T-cell (primary cell): ENCODE measurements at regions of chrX and their contacts with region 1.

Region 1: GRCh38 chrX:113868177-113868576 is 715.7 kb upstream of the HTR2C start:
- DNase-seq: no peak
- ATAC-seq: no peak
- H3K4me3 ChIP-seq: no peak overlapping the region
- H3K4me3 Mint-ChIP-seq: no peak overlapping the region
- H3K27ac ChIP-seq: no peak overlapping the region
- H3K27ac Mint-ChIP-seq: no peak overlapping the region
- H3K4me1 ChIP-seq: peaks cover 0 to 4% of the 10 kb centered on the region in 2 experiments
- H3K4me1 Mint-ChIP-seq: peaks cover 0 to 6% (median 2%) of the 10 kb centered on the region in 3 donors
- H3K27me3 ChIP-seq: no peaks in the 10 kb centered on the region
- H3K27me3 Mint-ChIP-seq: no peaks in the 10 kb centered on the region

Region 2: GRCh38 chrX:113759422-113759821 is 108.8 kb before region 1 on chrX:
- CTCF ChIA-PET with region 1: no interaction called
- POLR2A ChIA-PET with region 1: no interaction called
- DNase-seq: no peak
- ATAC-seq: no peak
- H3K4me3 ChIP-seq: no peak overlapping the region
- H3K4me3 Mint-ChIP-seq: no peak overlapping the region
- H3K27ac ChIP-seq: no peak overlapping the region
- H3K27ac Mint-ChIP-seq: no peak overlapping the region
- H3K4me1 ChIP-seq: no peaks in the 10 kb centered on the region
- H3K4me1 Mint-ChIP-seq: no peaks in the 10 kb centered on the region
- H3K27me3 ChIP-seq: no peaks in the 10 kb centered on the region
- H3K27me3 Mint-ChIP-seq: no peaks in the 10 kb centered on the region

Region 3: DNA sequence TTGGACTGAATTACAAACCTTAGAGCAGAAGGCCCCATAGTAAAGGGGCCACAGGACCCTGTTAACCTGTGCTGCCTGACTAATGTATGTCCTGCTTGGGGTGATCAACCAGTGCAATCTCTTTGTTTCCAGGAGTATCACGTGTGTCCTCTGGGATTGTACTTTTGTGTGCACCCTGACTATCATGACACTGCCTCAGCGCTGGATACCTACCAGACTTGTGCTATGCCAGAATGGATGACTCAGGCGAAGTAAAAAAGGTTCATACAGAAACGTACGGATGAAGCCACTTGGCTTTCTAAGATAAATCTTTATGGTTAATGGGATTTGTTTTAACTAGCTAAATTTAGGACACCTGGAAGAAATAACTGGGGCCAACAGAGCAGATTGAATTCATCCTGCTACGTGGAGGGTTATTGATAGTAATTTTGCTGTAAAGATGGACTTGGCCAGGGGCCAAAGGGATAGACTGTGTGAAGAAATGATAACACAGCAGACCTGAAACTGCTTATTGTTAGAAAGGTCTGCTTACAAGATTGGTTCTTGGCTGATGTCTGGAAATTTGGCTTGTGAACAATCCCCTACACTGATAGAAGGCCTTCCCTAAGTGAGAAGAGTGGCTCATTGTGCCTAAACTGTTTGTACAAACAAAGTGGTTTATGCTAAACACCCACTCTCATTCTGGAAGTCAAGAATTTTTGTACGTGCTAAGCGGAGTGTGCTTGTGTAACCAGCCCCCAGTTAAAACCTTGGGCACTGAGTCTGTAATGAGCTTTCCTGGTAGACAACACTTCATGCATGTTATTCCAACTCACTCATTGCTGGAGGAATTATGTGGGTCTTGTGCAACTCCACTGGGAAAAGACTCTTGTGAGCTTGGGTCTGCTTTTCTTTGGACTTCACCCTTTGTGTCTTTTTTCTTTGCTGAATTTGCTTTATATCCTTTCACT is 34.8 kb before region 1 on chrX:
- CTCF ChIA-PET with region 1: interaction called in 1 of 2 experiments, 10 read pairs
- POLR2A ChIA-PET with region 1: no interaction called
- DNase-seq: no peak
- ATAC-seq: no peak
- H3K4me3 ChIP-seq: no peak overlapping the region
- H3K4me3 Mint-ChIP-seq: no peak overlapping the region
- H3K27ac ChIP-seq: no peak overlapping the region
- H3K27ac Mint-ChIP-seq: no peak overlapping the region
- H3K4me1 ChIP-seq: no peaks in the 10 kb centered on the region
- H3K4me1 Mint-ChIP-seq: no peaks in the 10 kb centered on the region
- H3K27me3 ChIP-seq: no peaks in the 10 kb centered on the region
- H3K27me3 Mint-ChIP-seq: no peaks in the 10 kb centered on the region

Region 4: DNA sequence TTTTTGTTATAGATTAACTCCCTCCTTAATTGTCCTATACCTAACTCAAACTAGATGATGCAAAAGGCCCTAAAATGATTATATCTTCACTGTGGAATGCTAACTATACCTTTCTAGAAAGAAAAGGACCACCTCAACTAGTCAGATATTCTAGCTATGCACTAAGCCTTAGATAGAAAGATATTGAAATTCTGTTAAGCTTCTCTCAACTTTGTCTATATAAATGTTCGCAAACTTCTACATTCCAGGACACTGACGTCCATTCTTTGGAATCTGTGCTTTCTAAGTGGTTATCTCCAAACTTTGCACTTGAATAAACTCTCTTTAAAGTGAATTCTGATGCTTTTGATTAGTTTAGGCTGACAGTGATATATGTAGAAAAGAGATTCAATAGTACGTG is 23.2 kb before region 1 on chrX:
- CTCF ChIA-PET with region 1: no interaction called
- POLR2A ChIA-PET with region 1: no interaction called
- DNase-seq: no peak
- ATAC-seq: no peak
- H3K4me3 ChIP-seq: no peak overlapping the region
- H3K4me3 Mint-ChIP-seq: no peak overlapping the region
- H3K27ac ChIP-seq: no peak overlapping the region
- H3K27ac Mint-ChIP-seq: no peak overlapping the region
- H3K4me1 ChIP-seq: no peaks in the 10 kb centered on the region
- H3K4me1 Mint-ChIP-seq: no peaks in the 10 kb centered on the region
- H3K27me3 ChIP-seq: no peaks in the 10 kb centered on the region
- H3K27me3 Mint-ChIP-seq: peaks cover 0 to 13% of the 10 kb centered on the region in 2 donors